Dendritic cell treated with granulocyte-macrophage colony-stimulating factor and Interleukin-4, amounts not matched to agents 40 ng/mL and 50 ng/mL, for 4 days (primary cell): ENCODE measurements at regions of chr15 and their contacts with region 1.

Region 1: DNA sequence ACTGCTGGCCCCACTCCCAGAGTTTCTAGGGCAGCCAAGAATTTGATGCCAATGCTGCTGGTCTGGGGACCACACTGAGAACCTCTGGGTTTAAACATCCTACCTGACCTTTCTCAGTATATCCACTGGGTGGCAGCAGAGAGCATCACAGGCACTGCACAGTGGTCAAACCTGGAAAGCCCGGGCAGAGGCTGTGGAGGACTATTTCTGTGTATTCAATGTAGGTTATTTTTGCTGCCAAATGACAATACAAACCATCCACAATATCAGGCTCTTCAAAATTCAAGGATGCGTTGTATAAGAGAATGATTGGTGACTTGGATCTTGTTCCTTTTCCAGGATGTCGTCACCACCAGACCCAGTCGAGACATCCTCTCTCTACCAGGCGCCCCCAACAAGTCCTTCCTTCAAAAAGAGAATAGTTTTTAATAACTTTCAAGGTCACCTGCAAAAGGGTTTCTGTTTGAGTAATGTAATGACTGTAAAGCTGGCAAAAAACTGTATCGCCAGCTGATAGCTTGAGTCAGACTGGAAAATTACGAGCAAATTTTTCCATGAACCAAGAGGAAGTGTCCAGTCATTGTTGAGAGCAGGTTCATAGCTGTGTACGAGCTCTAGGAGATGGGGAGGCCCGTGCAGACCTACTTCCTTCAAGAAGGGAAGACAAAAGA is 30.5 kb upstream of the MYZAP start:
- H3K4me3 Mint-ChIP-seq: peak overlapping the region; percentile 32
- H3K27ac Mint-ChIP-seq: peak overlapping the region; percentile 86
- H3K4me1 Mint-ChIP-seq: peaks cover 37% of the 10 kb centered on the region
- H3K27me3 Mint-ChIP-seq: peaks cover 27% of the 10 kb centered on the region

Region 2: DNA sequence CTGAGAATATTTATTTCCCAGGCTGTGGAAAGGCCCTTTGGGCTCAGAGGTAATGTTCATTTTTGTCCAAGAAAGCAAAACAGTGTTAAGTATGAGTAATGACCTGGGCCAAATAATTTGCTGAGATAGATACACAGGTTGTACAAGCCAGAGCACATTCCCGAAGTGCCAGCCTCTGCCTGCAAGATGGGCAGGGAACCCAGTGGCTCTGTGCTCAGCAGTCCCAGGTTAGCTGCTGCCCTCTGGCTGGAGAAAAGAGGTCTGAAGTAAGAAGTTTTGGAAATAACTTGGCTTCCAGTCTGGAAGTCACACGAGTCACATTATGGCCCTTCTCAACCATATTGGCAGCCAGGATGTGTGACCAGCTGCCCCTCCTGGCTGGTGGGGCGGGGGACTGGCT is 50.8 kb after region 1 on chr15:
- intact Hi-C with region 1: loop called (anchors 2 kb)
- H3K4me3 Mint-ChIP-seq: no peak overlapping the region
- H3K27ac Mint-ChIP-seq: no peak overlapping the region
- H3K4me1 Mint-ChIP-seq: peaks cover 50% of the 10 kb centered on the region
- H3K27me3 Mint-ChIP-seq: no peaks in the 10 kb centered on the region

Region 3: DNA sequence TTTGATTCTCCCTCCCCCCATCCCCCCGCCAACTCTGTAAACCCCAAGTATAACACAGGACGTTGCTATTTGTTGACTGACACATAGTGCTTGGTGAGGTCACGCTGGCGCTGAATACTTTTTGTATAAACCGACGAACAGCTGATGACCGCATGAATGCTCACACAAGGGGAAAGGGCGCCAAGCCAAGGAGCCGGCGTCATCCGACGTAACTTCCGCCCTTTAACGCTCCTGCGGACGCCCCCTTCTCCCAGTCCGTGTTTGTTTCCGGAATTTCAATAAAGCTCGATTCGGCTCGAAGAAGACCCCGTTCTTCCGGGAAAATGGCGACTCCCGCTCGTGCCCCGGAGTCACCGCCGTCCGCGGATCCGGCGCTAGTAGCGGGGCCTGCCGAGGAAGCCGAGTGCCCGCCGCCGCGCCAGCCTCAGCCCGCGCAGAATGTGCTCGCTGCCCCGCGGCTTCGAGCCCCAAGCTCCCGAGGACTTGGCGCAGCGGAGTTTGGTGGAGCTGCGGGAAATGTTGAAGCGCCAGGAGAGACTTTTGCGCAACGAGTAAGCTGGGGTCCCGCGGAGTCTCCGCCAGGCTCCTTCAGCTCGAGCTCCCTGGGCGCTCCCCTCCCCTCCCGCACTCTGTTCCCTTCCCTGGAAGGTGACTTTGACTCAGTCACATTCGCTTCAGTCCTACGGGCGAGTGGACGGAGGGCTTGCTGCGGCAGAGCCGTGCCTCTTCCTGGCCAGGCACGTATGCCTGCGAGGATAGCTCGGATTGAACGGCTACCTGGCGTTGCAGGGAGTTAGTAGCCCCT is 145.4 kb after region 1 on chr15 and contains the start of gene POLR2M:
- intact Hi-C with region 1: loop called (anchors 2 kb)
- H3K4me3 Mint-ChIP-seq: peak within 1 kb of the TSS; percentile 89
- H3K27ac Mint-ChIP-seq: peak within 1 kb of the TSS; percentile 94
- H3K4me1 Mint-ChIP-seq: peaks cover 24% of the 10 kb centered on the region
- H3K27me3 Mint-ChIP-seq: peaks cover 17% of the 10 kb centered on the region

Region 4: GRCh38 chr15:58070801-58071418 is 509.7 kb after region 1 on chr15:
- intact Hi-C with region 1: loop called (anchors 10 kb)
- H3K4me3 Mint-ChIP-seq: no peak overlapping the region
- H3K27ac Mint-ChIP-seq: no peak overlapping the region
- H3K4me1 Mint-ChIP-seq: peaks cover 21% of the 10 kb centered on the region
- H3K27me3 Mint-ChIP-seq: peaks cover 40% of the 10 kb centered on the region